CD4-positive, alpha-beta T cell (primary cell): ENCODE measurements at regions of chr11 and their contacts with region 1.

Region 1: DNA sequence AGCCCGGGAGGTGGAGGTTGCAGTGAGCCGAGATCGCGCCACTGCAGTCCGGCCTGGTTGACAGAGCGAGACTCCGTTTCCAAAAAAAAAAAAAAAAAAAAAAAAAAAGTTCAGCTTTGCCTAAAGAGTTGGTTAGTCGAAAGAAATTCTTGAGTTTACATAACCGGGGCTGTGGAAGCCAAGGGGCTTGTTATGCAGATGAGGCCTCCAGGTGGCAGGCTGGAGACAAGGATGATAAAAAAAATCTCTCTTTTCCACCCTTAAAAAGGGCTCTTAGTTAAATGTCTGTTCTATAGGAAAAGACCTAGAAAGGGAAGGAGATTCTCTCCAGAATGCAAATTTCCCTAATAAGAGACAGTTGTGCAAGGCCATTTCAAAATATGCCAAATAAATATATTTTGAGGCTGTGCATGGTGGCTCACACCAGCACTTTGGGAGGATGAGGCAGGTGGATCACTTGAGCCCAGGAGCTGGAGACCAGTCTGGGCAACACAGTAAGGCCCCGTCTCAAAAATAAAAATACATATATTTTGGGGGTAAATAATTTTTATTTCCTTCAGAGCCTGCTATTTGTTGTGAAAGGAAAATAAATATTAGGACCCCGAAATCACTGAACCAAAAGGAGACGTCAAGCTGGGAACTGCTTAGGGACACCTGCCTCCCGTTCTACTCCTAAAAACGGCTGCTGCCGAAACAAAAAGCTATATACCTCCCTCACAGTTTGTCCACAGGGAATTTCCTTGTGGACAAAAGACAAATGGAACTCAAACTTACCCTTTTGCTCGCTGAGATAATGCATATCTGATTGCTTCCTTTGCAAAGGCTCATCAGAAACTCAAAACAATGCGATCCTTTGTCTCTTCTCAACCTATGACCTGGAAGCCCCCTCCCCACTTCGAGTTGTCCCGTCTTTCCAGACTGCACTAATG is 2.4 kb upstream of the IFITM2 start:
- DNase-seq: peak in 9 of 14 experiments; percentile 52 to 87 (median 63)
- ATAC-seq: peak; percentile 37
- H3K4me3 ChIP-seq: no peak overlapping the region
- H3K4me3 Mint-ChIP-seq: peak overlapping the region; percentile 85
- H3K27ac ChIP-seq: no peak overlapping the region
- H3K27ac Mint-ChIP-seq: peak overlapping the region; percentile 96
- H3K4me1 ChIP-seq: peaks cover 50% of the 10 kb centered on the region
- H3K4me1 Mint-ChIP-seq: peaks cover 39% of the 10 kb centered on the region
- H3K27me3 ChIP-seq: no peaks in the 10 kb centered on the region
- H3K27me3 Mint-ChIP-seq: no peaks in the 10 kb centered on the region
- CTCF ChIP-seq: peak; percentile 80

Region 2: DNA sequence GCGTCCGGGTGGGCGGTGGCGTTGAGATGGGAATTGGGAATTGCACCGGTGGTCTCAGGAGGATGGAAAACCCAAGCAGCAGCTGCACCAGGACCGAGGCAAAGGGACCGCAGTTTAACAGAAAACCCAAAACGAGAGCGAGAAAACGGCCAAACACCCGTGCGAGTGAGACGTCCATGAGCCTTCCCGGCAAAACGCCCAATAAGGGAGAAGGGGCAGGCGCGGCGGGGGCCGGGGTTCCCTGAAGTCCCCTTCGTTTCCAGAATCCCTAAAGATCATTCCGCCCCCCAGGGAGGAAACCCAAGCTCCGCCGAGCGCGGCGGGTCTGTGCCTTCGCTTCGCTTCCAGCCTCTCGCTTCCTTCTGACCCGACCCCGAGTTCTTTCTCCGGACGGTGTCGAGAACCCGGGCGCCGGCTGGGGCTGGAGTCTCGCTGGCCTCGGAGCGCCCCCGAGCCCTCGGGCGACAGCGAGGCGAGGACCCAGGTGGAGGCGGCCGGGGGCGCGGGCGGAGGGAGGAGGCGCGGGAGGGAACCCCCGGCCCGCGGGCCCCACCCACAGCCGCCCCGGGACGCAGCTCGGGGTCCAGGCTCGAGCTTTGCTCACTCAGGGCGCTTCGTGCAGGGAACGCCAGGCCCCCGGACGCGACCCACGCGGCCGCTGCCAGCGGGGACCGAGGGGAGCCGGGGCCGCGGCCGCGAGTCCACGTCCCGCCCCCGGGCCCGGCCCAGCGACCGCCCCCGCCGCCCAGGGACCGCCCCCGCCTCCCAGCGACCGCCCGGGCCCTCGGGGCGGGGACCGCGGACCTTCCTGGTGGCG is 16.6 kb before region 1 on chr11 and contains the start of gene PGGHG:
- CTCF ChIA-PET with region 1: interaction called, 9 read pairs
- POLR2A ChIA-PET with region 1: interaction called, 17 read pairs
- intact Hi-C with region 1: loop called in 1 of 2 experiments (anchors 2 kb)
- DNase-seq: peak in 11 of 14 experiments; percentile 18 to 75 (median 57)
- ATAC-seq: peak; percentile 10
- H3K4me3 ChIP-seq: peak within 1 kb of the TSS; percentile 82
- H3K4me3 Mint-ChIP-seq: peak within 1 kb of the TSS; percentile 91
- H3K27ac ChIP-seq: peak within 1 kb of the TSS; percentile 72 to 98
- H3K27ac Mint-ChIP-seq: peak within 1 kb of the TSS; percentile 93
- H3K4me1 ChIP-seq: peaks cover 42% of the 10 kb centered on the region
- H3K4me1 Mint-ChIP-seq: peaks cover 34% of the 10 kb centered on the region
- H3K27me3 ChIP-seq: peaks cover 0 to 5% of the 10 kb centered on the region in 2 experiments
- H3K27me3 Mint-ChIP-seq: peaks cover 4% of the 10 kb centered on the region
- CTCF ChIP-seq: no peak
- total RNA-seq, gene PGGHG: 670 to 671 TPM

Region 3: GRCh38 chr11:363948-364761 is 59.0 kb after region 1 on chr11:
- CTCF ChIA-PET with region 1: interaction called, 17 read pairs
- POLR2A ChIA-PET with region 1: no interaction called
- intact Hi-C with region 1: loop called in 1 of 2 experiments (anchors 5 kb)
- DNase-seq: peak; percentile 46 to 80 (median 64)
- ATAC-seq: peak; percentile 80
- H3K4me3 ChIP-seq: no peak overlapping the region
- H3K4me3 Mint-ChIP-seq: no peak overlapping the region
- H3K27ac ChIP-seq: no peak overlapping the region
- H3K27ac Mint-ChIP-seq: no peak overlapping the region
- H3K4me1 ChIP-seq: peaks cover 19% of the 10 kb centered on the region
- H3K4me1 Mint-ChIP-seq: peaks cover 24% of the 10 kb centered on the region
- H3K27me3 ChIP-seq: peaks cover 17 to 25% of the 10 kb centered on the region in 2 experiments
- H3K27me3 Mint-ChIP-seq: peaks cover 35% of the 10 kb centered on the region
- CTCF ChIP-seq: peak; percentile 37

Region 4: DNA sequence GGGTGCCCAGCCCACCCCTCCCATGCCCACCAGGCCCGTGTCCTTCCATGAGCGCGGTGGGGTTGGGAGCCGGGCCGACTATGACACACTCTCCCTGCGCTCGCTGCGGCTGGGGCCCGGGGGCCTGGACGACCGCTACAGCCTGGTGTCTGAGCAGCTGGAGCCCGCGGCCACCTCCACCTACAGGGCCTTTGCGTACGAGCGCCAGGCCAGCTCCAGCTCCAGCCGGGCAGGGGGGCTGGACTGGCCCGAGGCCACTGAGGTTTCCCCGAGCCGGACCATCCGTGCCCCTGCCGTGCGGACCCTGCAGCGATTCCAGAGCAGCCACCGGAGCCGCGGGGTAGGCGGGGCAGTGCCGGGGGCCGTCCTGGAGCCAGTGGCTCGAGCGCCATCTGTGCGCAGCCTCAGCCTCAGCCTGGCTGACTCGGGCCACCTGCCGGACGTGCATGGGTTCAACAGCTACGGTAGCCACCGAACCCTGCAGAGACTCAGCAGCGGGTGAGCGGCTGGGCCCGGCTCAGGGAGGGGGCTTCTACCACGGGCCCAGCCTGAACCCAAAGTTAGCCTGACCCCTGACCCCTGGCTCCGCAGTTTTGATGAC is 91.9 kb after region 1 on chr11:
- CTCF ChIA-PET with region 1: no interaction called
- POLR2A ChIA-PET with region 1: no interaction called
- intact Hi-C with region 1: loop called in 1 of 2 experiments (anchors 1 kb)
- DNase-seq: peak in 7 of 14 experiments; percentile 31 to 71 (median 62)
- ATAC-seq: peak; percentile 68
- H3K4me3 ChIP-seq: peak overlapping the region; percentile 47
- H3K4me3 Mint-ChIP-seq: no peak overlapping the region
- H3K27ac ChIP-seq: no peak overlapping the region
- H3K27ac Mint-ChIP-seq: no peak overlapping the region
- H3K4me1 ChIP-seq: peaks cover 24% of the 10 kb centered on the region
- H3K4me1 Mint-ChIP-seq: peaks cover 5% of the 10 kb centered on the region
- H3K27me3 ChIP-seq: no peaks in the 10 kb centered on the region
- H3K27me3 Mint-ChIP-seq: peaks cover 16% of the 10 kb centered on the region
- CTCF ChIP-seq: peak; percentile 39

Region 5: GRCh38 chr11:447923-448731 is 142.9 kb after region 1 on chr11:
- CTCF ChIA-PET with region 1: interaction called, 6 read pairs
- POLR2A ChIA-PET with region 1: interaction called, 4 read pairs
- intact Hi-C with region 1: loop called (anchors 1 to 2 kb)
- DNase-seq: peak; percentile 91 to 98 (median 94)
- ATAC-seq: peak; percentile 66
- H3K4me3 ChIP-seq: peak overlapping the region; percentile 63
- H3K4me3 Mint-ChIP-seq: peak overlapping the region; percentile 93
- H3K27ac ChIP-seq: peak overlapping the region; percentile 84 to 89
- H3K27ac Mint-ChIP-seq: peak overlapping the region; percentile 95
- H3K4me1 ChIP-seq: peaks cover 38% of the 10 kb centered on the region
- H3K4me1 Mint-ChIP-seq: peaks cover 26% of the 10 kb centered on the region
- H3K27me3 ChIP-seq: no peaks in the 10 kb centered on the region
- H3K27me3 Mint-ChIP-seq: no peaks in the 10 kb centered on the region
- CTCF ChIP-seq: peak; percentile 93

Region 6: DNA sequence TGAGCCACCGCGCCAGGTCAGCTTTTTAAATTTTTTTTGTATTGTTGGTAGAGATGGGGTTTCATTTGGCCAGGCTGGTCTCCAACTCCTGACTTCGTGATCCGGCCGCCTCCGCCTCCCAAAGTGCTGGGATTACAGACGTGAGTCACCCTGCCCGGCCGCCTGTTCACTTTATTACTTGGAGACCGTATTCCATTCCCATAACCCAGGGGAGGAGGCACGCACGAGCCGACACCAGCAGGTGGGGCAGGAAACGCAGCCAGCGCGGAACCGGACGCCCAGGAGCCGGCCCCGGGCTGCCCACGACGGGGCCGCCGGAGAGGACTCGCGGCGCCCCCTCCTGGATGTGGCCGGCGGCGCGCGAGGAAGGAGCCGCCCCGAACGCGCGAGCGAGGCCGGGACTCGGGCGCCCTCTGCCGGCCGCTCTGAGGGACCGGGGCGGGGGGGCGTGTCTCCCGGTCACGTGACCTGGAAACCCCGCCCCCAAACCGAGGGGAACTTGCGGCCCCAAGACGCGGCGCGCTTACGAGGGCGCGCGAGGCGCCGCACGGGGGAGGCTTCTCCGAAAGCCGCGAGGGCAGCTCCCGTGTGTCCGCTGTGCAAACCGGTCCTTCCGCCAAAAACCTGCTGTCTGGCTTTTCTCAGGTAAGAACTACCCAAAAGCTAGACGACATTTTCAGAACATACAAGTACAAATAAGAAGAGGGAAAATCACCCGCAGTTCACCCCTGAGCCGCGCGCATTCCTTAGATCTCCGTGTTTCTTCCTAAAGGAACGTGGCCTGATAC is 213.5 kb after region 1 on chr11:
- CTCF ChIA-PET with region 1: no interaction called
- POLR2A ChIA-PET with region 1: no interaction called
- intact Hi-C with region 1: loop called in 1 of 2 experiments (anchors 10 kb)
- DNase-seq: peak; percentile 79 to 95 (median 86)
- ATAC-seq: peak; percentile 94
- H3K4me3 ChIP-seq: peak overlapping the region; percentile 43
- H3K4me3 Mint-ChIP-seq: peak overlapping the region; percentile 85
- H3K27ac ChIP-seq: peak overlapping the region in 1 of 2 donors; percentile 41
- H3K27ac Mint-ChIP-seq: no peak overlapping the region
- H3K4me1 ChIP-seq: peaks cover 8% of the 10 kb centered on the region
- H3K4me1 Mint-ChIP-seq: peaks cover 4% of the 10 kb centered on the region
- H3K27me3 ChIP-seq: no peaks in the 10 kb centered on the region
- H3K27me3 Mint-ChIP-seq: no peaks in the 10 kb centered on the region
- CTCF ChIP-seq: peak; percentile 96